Activated CD4-positive, alpha-beta memory T cell treated with anti-CD3 and anti-CD28 coated beads for 36 hours (primary cell): ENCODE measurements at regions of chr1 and their contacts with region 1.

Region 1: DNA sequence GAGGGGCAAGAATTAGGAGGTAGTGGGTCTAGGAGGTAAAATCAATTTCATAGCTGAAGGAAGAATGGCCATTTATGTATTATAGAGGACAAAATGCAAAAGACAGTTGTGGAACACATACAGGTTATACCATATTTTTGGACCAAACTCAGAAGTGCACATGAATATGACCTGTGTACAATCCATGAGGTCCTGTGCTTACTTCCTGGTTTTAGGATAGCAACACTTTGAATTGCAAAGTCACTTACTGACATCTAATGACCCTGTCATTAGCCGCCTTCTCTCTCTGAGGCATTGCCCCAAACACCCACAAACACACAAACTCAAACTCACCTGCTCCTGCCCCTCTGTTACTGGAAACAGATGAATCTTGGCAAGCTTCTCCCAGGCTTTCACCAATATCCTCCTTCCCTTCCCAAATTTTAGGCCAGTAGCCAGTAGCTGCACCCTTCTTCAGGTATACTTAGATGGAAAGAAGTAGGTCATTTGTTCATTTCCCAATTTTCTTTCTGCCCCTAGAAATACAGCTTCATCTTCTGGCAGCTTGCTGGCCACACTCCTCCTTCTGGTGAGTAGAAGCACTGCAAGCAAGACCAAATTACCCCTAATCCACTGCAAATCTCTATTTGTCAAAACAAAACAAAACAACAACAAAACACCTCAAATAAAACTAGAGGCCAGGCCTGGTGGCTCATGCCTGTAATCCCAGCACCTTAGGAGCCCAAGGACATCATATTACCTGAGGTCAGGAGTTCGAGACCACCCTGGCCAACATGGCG is 13.7 kb upstream of the RPL5 start:
- DNase-seq: no peak
- H3K4me3 Mint-ChIP-seq: no peak overlapping the region
- H3K27ac Mint-ChIP-seq: no peak overlapping the region
- H3K4me1 Mint-ChIP-seq: no peaks in the 10 kb centered on the region
- H3K27me3 Mint-ChIP-seq: peaks cover 8% of the 10 kb centered on the region

Region 2: DNA sequence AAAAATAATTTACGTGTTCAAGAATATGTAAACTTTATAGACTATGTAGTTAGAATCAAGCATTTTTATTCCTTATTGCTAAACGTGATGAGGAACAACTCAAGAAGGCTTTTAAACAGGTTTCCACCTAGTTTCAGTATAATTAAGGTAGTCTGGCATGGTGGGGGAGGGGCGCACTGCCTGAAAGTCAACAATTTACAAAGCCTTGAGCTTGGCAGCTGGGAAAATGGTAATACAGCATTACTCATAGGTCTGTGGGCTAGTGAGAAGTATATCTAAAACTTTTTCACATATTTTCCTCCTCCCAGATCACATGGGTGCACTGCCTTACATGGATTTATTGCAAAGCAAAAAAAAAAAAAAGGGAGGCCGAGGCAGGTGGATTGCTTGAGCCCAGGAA is 108.4 kb before region 1 on chr1:
- CTCF ChIA-PET with region 1: no interaction called
- POLR2A ChIA-PET with region 1: no interaction called
- intact Hi-C with region 1: no loop called
- DNase-seq: no peak
- H3K4me3 Mint-ChIP-seq: no peak overlapping the region
- H3K27ac Mint-ChIP-seq: no peak overlapping the region
- H3K4me1 Mint-ChIP-seq: no peaks in the 10 kb centered on the region
- H3K27me3 Mint-ChIP-seq: no peaks in the 10 kb centered on the region

Region 3: DNA sequence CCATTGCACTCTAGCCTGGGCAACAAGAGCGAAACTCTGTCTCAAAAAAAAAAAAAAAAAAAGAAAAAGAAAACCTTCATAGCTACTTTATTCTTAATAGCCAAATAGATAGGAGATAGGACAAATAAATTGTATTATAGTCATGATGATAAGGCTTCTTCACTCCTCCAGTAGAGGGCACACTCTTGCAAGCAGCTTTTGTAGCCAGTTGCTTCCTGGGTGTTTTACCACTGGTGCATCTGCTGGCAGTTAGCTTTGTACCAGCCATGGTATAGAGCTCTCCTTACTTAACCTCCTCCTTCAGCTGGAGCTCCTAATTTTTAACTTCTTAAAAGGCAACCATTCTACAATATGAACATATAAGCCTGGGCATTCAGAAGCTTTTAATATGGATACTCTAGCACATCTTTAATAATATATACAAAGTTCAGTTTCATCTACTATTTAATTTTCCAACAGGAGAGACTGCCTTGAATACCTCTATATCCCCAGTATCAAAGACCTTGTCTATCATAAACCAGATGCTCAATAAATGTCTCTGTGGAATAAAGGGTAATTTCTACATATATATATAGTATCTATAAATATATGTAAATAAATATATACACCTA is 69.0 kb before region 1 on chr1:
- CTCF ChIA-PET with region 1: interaction called, 157 read pairs
- POLR2A ChIA-PET with region 1: no interaction called
- intact Hi-C with region 1: loop called (anchors 1 kb)
- DNase-seq: peak; percentile 36
- H3K4me3 Mint-ChIP-seq: no peak overlapping the region
- H3K27ac Mint-ChIP-seq: no peak overlapping the region
- H3K4me1 Mint-ChIP-seq: no peaks in the 10 kb centered on the region
- H3K27me3 Mint-ChIP-seq: peaks cover 4% of the 10 kb centered on the region

Region 4: GRCh38 chr1:92754000-92754718 is 64.0 kb before region 1 on chr1:
- CTCF ChIA-PET with region 1: interaction called, 157 read pairs
- POLR2A ChIA-PET with region 1: no interaction called
- intact Hi-C with region 1: loop called (anchors 1 kb)
- DNase-seq: no peak
- H3K4me3 Mint-ChIP-seq: no peak overlapping the region
- H3K27ac Mint-ChIP-seq: no peak overlapping the region
- H3K4me1 Mint-ChIP-seq: no peaks in the 10 kb centered on the region
- H3K27me3 Mint-ChIP-seq: peaks cover 4% of the 10 kb centered on the region

Region 5: DNA sequence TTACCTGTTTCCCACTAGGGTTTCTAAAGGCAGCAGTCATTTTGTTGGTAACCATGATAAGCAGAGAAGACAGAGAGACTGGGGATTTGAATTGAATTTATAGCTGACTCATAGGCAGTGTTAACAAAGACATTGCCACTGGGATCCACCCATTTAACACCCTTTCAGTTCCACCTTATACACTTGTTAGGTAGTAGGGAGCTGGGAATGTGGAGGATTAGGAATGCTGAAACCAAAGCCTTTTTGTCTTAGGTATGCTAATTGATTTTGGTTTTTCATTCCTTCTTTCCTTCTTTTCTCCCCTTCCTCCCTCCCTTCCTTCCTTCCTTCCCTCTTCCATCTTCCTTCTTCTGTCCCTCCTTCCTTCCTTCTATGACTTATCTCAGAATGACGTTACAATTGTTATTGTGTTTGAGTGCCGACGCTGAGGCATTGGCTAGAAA is 25.8 kb before region 1 on chr1:
- CTCF ChIA-PET with region 1: interaction called, 20 read pairs
- POLR2A ChIA-PET with region 1: no interaction called
- intact Hi-C with region 1: no loop called
- DNase-seq: no peak
- H3K4me3 Mint-ChIP-seq: no peak overlapping the region
- H3K27ac Mint-ChIP-seq: no peak overlapping the region
- H3K4me1 Mint-ChIP-seq: peaks cover 3% of the 10 kb centered on the region
- H3K27me3 Mint-ChIP-seq: peaks cover 22% of the 10 kb centered on the region

Region 6: GRCh38 chr1:92858564-92859399 is 40.6 kb after region 1 on chr1:
- CTCF ChIA-PET with region 1: no interaction called
- POLR2A ChIA-PET with region 1: no interaction called
- intact Hi-C with region 1: no loop called
- DNase-seq: peak; percentile 39
- H3K4me3 Mint-ChIP-seq: peak overlapping the region; percentile 7
- H3K27ac Mint-ChIP-seq: peak overlapping the region; percentile 0
- H3K4me1 Mint-ChIP-seq: peaks cover 19% of the 10 kb centered on the region
- H3K27me3 Mint-ChIP-seq: no peaks in the 10 kb centered on the region